ENCODE measurements at regions of chr6 and their contacts with region 1.

Region 1: DNA sequence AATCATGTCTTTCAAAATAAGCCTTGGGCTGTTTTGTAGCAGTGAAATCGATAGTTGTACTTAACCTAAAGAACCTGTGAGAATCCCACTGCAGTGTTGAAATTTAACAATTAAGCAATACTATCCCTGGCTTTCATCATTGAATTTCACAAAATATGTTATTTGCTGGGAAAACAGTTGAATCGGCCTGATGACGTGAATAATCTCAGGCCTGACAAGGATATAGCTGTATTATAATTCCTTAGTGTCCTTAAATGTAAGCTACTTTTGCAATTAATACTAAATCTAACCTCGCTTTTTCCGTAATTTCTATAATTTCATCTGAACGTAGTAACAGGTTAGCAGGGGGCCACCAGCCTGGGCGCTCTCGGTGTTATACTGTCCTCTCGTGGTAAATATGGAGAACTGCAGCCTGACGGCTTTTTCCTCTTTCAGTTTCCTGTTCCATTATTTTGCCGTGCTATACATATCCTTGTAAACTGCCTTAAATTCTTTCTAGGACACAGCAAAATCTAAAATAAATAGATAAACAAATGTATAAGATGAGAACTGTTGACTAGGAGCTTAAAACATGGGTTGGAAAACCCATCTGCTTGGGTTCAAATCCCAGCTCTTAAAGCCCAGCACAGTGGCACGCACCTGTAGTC is 24.0 kb downstream of the MTFR2 start:
- DNase-seq: peak; percentile 67
- ATAC-seq: peak; percentile 92
- H3K4me3 ChIP-seq: no peak overlapping the region
- H3K27ac ChIP-seq: peak overlapping the region; percentile 18; the same call in 1 of the 2 replicates
- H3K4me1 ChIP-seq: peaks cover 7% of the 10 kb centered on the region
- H3K27me3 ChIP-seq: no peaks in the 10 kb centered on the region
- CTCF ChIP-seq: peak; percentile 100; the same call in 1 of the 2 replicates
- POLR2A ChIP-seq: peak; percentile 74
- RAD21 ChIP-seq: peak; percentile 100

Region 2: GRCh38 chr6:135506270-135506997 is 719.7 kb before region 1 on chr6:
- CTCF ChIA-PET with region 1: interaction called, 11 read pairs
- POLR2A ChIA-PET with region 1: no interaction called
- dilution Hi-C with region 1: no loop called
- in situ Hi-C with region 1: no loop called
- intact Hi-C with region 1: loop called (anchors 1 kb)
- DNase-seq: peak; percentile 74
- ATAC-seq: peak; percentile 86
- H3K4me3 ChIP-seq: no peak overlapping the region
- H3K27ac ChIP-seq: no peak overlapping the region
- H3K4me1 ChIP-seq: peaks cover 2% of the 10 kb centered on the region; the same call in 1 of the 2 replicates
- H3K27me3 ChIP-seq: no peaks in the 10 kb centered on the region
- CTCF ChIP-seq: peak; percentile 68
- POLR2A ChIP-seq: no peak
- RAD21 ChIP-seq: peak; percentile 85

Region 3: GRCh38 chr6:135675862-135676261 is 550.3 kb before region 1 on chr6:
- CTCF ChIA-PET with region 1: no interaction called
- POLR2A ChIA-PET with region 1: no interaction called
- dilution Hi-C with region 1: no loop called
- in situ Hi-C with region 1: no loop called
- intact Hi-C with region 1: loop called (anchors 1 kb)
- DNase-seq: peak; percentile 41
- ATAC-seq: no peak
- H3K4me3 ChIP-seq: no peak overlapping the region
- H3K27ac ChIP-seq: no peak overlapping the region
- H3K4me1 ChIP-seq: peaks cover 8% of the 10 kb centered on the region
- H3K27me3 ChIP-seq: no peaks in the 10 kb centered on the region
- CTCF ChIP-seq: 0 out of 2 replicates have a peak, but pooled peaks have one; percentile 22
- POLR2A ChIP-seq: no peak
- RAD21 ChIP-seq: peak; percentile 41

Region 4: DNA sequence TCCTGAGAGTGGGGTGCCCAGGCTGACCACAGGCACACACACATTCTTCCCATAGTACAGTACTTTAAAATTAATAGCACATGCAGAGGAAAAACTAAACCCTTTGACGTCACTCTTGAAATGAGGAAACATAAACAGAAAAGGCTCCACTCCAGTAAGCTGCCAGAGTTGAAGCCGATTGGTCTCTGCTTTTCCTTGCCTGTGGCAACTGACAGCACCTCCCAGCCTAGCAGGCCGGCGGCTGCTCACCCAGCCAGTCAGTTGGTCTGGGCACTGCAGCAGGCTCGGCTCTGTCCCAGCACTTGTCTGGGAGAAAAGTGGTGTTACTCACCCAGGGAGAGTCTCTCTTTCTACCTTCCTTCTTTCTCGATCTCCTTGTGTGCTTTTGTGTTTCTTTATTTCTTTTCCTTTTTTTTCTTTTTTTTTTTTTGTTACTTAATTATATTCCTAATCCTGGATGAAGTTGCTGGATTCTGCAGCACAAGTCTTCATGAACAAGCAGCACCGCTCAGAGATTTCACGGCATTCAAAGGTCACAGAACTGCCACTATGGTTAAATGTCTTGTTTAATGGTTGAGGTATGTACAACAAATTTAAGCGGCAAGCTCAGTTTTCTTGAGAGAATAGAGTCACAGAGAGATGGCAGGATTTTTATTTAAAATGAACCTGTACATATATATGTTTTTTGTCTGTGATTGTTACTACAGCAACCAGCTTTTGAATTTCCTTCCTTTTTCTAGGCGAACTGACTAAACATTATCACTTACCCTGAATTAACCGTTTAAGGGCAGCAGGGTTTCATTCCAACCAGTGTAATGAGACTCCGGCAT is 374.5 kb before region 1 on chr6 and contains the start of gene PDE7B:
- CTCF ChIA-PET with region 1: interaction called, 3 read pairs
- POLR2A ChIA-PET with region 1: no interaction called
- dilution Hi-C with region 1: no loop called
- in situ Hi-C with region 1: no loop called
- intact Hi-C with region 1: loop called (anchors 5 kb)
- DNase-seq: peak; percentile 99
- ATAC-seq: peak; percentile 99
- H3K4me3 ChIP-seq: peak within 1 kb of the TSS; percentile 65
- H3K27ac ChIP-seq: peak within 1 kb of the TSS; percentile 98
- H3K4me1 ChIP-seq: peaks cover 11% of the 10 kb centered on the region
- H3K27me3 ChIP-seq: no peaks in the 10 kb centered on the region
- CTCF ChIP-seq: no peak
- POLR2A ChIP-seq: peak; percentile 99
- RAD21 ChIP-seq: peak; percentile 30; the same call in 1 of the 2 replicates
- total RNA-seq, gene PDE7B: 12.4 and 15.6 TPM in 2 replicates

Region 5: GRCh38 chr6:136014454-136015421 is 211.4 kb before region 1 on chr6:
- CTCF ChIA-PET with region 1: interaction called, 3 read pairs
- POLR2A ChIA-PET with region 1: no interaction called
- dilution Hi-C with region 1: no loop called
- in situ Hi-C with region 1: no loop called
- intact Hi-C with region 1: loop called (anchors 5 kb)
- DNase-seq: peak; percentile 100
- ATAC-seq: peak; percentile 81
- H3K4me3 ChIP-seq: no peak overlapping the region
- H3K27ac ChIP-seq: peak overlapping the region; percentile 99
- H3K4me1 ChIP-seq: peaks cover 23% of the 10 kb centered on the region
- H3K27me3 ChIP-seq: no peaks in the 10 kb centered on the region
- CTCF ChIP-seq: no peak
- POLR2A ChIP-seq: peak; percentile 78
- RAD21 ChIP-seq: peak; percentile 22

Region 6: DNA sequence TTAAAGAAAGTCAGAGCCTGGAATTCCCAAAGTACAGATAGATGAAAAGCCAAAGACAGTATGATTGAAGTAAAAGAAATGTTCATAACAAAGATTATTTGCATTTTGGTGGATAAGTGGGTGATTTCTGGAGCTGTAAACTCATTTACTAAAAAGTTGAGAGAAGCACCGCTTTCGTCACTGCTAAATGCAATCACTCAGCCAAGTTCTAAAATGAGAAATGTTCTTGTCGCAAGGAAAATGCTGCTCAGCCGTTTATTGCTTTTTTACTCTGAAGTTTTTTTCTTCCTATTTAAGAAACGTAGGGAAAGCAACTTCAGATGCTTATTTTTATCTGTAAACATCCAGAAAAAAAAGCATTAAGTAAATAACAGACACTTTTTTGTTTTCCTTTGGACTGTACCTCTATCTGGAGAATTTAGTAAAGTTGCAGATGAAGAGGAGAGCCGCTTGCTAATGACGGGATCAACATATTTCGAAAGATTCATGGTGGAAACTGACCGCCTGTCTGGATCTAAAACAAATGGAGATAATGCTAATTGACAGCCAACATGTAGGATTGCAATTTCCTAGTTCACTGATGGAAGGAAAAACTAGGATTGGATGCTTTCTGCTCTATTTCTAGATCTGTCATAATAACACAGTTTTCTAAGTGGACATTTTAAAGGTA is 157.3 kb after region 1 on chr6:
- CTCF ChIA-PET with region 1: no interaction called
- POLR2A ChIA-PET with region 1: no interaction called
- dilution Hi-C with region 1: no loop called
- in situ Hi-C with region 1: no loop called
- intact Hi-C with region 1: no loop called
- DNase-seq: no peak
- ATAC-seq: no peak
- H3K4me3 ChIP-seq: no peak overlapping the region
- H3K27ac ChIP-seq: no peak overlapping the region
- H3K4me1 ChIP-seq: no peaks in the 10 kb centered on the region; the same call in 1 of the 2 replicates
- H3K27me3 ChIP-seq: peaks cover 2% of the 10 kb centered on the region; the same call in 1 of the 2 replicates
- CTCF ChIP-seq: no peak
- POLR2A ChIP-seq: no peak
- RAD21 ChIP-seq: no peak